Posterior cingulate gyrus (tissue), 11 donors: ENCODE measurements at regions of chr20 and their contacts with region 1.

Region 1: DNA sequence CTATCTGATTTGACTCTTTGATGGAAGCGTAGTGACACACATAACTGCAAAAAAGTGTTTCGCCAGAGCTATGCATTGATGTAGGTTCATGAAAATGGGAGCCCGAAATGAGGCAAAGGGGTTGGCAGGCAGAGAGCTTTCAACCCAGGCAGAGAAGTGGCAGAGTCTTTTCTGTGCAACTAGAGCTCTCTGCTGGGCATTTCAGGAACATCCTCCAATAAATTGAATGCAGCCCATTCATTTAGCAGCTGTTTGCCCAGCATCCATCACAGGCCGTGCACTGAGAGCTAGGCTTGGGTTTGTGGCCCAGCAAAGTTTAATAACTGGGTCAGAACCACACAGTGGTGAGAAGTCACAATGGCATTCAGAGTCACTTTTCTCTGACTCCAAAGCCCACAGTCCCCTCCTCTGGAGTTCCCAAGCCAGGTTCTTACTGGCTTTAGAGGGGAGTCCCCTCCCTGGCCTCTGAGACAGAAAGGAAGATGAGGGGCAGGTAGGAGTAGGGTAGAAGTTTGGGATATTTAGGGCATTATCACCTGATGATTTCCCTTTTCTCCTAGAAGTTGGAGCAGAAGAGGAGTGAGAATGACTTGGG is 31.8 kb upstream of the ELMO2 start:
- DNase-seq: peak in 8 of 10 donors; percentile 46 to 90 (median 63)

Region 2: DNA sequence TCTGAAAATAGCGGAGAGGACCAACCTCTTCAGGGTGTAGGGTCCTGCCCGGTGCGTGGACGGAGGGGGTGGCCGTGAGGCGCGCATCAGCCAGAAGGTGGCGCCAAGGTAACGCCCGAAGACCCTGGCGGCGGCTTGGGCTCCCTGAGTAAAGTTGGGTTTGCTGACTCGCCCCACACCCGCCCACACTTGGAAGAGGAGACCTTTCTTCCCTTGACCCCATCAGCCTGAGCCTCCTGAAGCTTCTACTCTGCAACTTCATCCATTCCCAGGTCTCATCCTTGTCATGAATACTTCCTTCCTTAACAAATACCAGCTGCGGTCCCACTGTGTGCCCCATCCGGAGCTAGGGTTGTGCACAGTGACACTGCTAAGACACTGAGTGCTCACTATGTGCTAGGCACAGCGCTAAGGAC is 305.5 kb before region 1 on chr20:
- intact Hi-C with region 1: loop called (anchors 2 kb)
- DNase-seq: peak; percentile 50 to 96 (median 74)

Region 3: DNA sequence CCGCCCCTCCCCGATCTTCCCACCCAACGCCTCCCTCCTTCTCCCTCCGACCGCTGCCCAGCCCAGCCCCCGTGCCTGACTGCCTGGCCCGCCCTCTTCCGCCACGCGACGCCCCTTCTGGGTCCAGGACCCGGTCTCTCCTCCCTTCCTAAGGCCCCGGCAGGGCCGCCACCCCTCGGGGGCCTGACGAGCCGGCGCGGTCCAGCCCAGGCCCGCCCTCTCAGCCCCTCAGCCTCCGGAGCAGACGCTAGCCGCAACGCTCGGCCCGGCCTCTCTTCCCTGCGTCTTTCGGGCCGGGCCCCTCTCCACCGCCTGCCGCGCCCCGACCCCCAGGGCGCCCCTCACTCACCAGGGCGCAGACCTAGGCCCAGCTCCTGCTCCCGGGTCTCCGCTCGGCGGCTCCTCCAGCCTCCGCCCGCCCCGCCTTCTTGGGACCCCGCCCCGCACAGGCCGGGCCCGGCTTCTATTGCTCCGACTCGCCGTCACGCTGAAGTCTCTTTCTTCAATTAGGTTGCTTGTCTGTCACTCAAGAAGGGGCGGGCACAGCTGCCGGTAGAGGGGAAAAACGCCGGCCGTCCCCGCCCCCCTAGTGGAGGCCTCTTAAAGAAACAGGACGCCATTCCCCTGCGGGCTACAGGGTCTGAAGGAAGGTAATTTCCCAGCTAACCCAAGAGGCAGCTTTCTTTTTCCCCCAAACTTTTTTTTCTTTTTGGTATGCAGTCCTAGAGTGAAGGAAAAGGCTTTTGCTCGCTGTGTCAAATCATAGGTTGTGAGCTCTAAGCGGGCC is 31.9 kb before region 1 on chr20 and contains the start of gene ELMO2:
- intact Hi-C with region 1: loop called (anchors 2 kb)
- DNase-seq: peak; percentile 94 to 100 (median 97)

Region 4: DNA sequence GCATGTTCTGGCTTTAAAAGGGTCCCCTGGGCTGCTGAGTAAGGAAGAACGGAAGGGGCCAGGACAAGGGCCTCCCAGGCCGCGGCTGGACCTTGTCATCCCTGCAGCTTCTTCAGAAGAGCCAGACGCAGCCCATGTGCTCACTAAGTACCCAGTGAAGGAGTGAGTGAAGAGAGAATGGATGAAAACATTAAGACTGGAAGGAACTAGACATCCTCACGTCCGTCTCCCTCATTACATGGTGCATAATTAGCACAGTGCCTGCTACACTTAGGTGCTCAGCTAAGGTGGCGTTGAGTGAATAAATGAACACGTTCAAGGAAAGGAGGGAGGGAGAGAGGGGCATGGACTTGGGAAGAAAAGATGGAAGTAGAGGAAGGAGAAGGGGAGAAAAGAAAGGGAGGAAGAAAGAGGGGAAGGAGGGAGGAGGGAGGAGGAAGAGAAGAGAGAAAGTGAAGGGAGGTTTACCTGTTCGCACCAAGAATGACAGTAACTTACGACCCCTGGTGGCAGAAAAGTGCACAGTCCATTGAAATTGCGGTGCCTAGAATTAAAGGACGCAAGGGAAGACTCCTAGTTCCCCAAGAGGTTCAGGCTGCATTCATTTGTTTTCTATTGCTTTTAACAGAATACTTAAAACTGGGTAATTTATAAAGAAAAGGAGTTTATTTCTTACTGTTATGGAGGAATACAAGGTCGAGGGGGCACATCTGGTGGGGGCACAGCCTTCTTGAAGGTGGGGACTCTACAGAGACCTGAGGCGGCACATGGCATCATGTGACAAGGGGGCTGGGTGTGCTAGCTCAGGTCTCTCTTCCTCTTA is 243.0 kb after region 1 on chr20:
- intact Hi-C with region 1: no loop called
- DNase-seq: peak in 8 of 10 donors; percentile 30 to 91 (median 76)